ENCODE measurements at regions of chr1 and their contacts with region 1.

Region 1: GRCh38 chr1:185144233-185144632 is 12.5 kb downstream of the TRMT1L start:
- DNase-seq: no peak
- H3K4me3 ChIP-seq: no peak overlapping the region
- H3K27ac ChIP-seq: no peak overlapping the region
- H3K4me1 ChIP-seq: no peaks in the 10 kb centered on the region
- H3K27me3 ChIP-seq: no peaks in the 10 kb centered on the region
- CTCF ChIP-seq: no peak
- EP300 ChIP-seq: no peak
- POLR2A ChIP-seq: no peak

Region 2: GRCh38 chr1:186325239-186325638 is 1181.0 kb after region 1 on chr1:
- in situ Hi-C with region 1: loop called in 1 of 4 experiments (anchors 25 kb)
- intact Hi-C with region 1: no loop called
- DNase-seq: no peak
- H3K4me3 ChIP-seq: no peak overlapping the region
- H3K27ac ChIP-seq: no peak overlapping the region
- H3K4me1 ChIP-seq: no peaks in the 10 kb centered on the region
- H3K27me3 ChIP-seq: no peaks in the 10 kb centered on the region
- CTCF ChIP-seq: peak in 1 of 5 experiments; percentile 2
- EP300 ChIP-seq: no peak
- POLR2A ChIP-seq: no peak

Measured in transverse colon (tissue), 4 donors.